H1 (cell line): ENCODE measurements at regions of chr11 and their contacts with region 1.

Region 1: GRCh38 chr11:9675691-9676090 is 11.8 kb downstream of the SWAP70 start:
- DNase-seq: no peak
- H3K4me3 ChIP-seq: peak overlapping the region; percentile 12 to 45 (median 31); a peak in 5 of 8 replicates
- H3K27ac ChIP-seq: no peak overlapping the region
- H3K4me1 ChIP-seq: peaks cover 0 to 15% (median 9%) of the 10 kb centered on the region in 4 experiments; a peak in 5 of 7 replicates
- H3K27me3 ChIP-seq: no peaks in the 10 kb centered on the region
- CTCF ChIP-seq: no peak
- EP300 ChIP-seq: no peak
- POLR2A ChIP-seq: no peak; a peak in 1 of 3 replicates
- RAD21 ChIP-seq: no peak; a peak in 1 of 4 replicates

Region 2: GRCh38 chr11:9663699-9664275 is 11.9 kb before region 1 on chr11 and contains the start of gene SWAP70:
- CTCF ChIA-PET with region 1: interaction called, 12 read pairs
- POLR2A ChIA-PET with region 1: interaction called, 16 read pairs
- DNase-seq: peak; percentile 63 to 96
- H3K4me3 ChIP-seq: peak within 1 kb of the TSS; percentile 66 to 98 (median 94)
- H3K27ac ChIP-seq: peak within 1 kb of the TSS; percentile 82; the same call in 1 of the 2 replicates
- H3K4me1 ChIP-seq: no peaks in the 10 kb centered on the region; a peak in 2 of 7 replicates
- H3K27me3 ChIP-seq: no peaks in the 10 kb centered on the region
- CTCF ChIP-seq: peak in 2 of 3 experiments; percentile 25 to 32; a peak in 2 of 4 replicates
- EP300 ChIP-seq: no peak
- POLR2A ChIP-seq: peak in 1 of 2 experiments; percentile 63; a peak in 2 of 3 replicates
- RAD21 ChIP-seq: peak in 1 of 2 experiments; percentile 37; a peak in 1 of 4 replicates
- total RNA-seq, gene SWAP70: 37.5 TPM in 2 replicates

Region 3: GRCh38 chr11:9787981-9788521 is 112.4 kb after region 1 on chr11:
- CTCF ChIA-PET with region 1: no interaction called
- POLR2A ChIA-PET with region 1: no interaction called
- DNase-seq: no peak
- H3K4me3 ChIP-seq: no peak overlapping the region
- H3K27ac ChIP-seq: no peak overlapping the region
- H3K4me1 ChIP-seq: no peaks in the 10 kb centered on the region
- H3K27me3 ChIP-seq: no peaks in the 10 kb centered on the region
- CTCF ChIP-seq: no peak
- EP300 ChIP-seq: no peak
- POLR2A ChIP-seq: no peak
- RAD21 ChIP-seq: no peak

Region 4: DNA sequence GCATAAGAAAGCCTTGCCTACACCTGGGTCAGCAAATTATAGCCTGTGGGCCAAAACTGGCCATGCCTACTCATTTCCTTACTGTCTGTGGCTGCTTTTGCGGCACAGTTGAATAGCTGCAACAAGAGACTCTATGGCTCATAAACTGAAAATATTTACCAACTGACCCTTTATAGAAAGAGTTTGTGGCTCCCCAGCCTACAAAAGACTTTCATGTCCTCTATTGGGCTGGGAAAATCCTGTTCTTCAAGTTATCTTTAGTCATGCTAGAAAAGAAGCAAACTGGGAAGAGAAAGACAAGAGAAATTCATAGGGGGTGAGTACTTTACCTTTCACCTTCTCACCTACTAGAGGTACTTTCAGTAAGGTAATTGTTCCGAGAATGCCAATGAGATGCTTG is 163.3 kb after region 1 on chr11:
- CTCF ChIA-PET with region 1: no interaction called
- POLR2A ChIA-PET with region 1: no interaction called
- DNase-seq: no peak
- H3K4me3 ChIP-seq: no peak overlapping the region
- H3K27ac ChIP-seq: no peak overlapping the region
- H3K4me1 ChIP-seq: peaks cover 0 to 8% (median 5%) of the 10 kb centered on the region in 4 experiments; a peak in 3 of 7 replicates
- H3K27me3 ChIP-seq: no peaks in the 10 kb centered on the region
- CTCF ChIP-seq: no peak
- EP300 ChIP-seq: no peak
- POLR2A ChIP-seq: no peak
- RAD21 ChIP-seq: no peak